Activated CD4-positive, alpha-beta T cell treated with anti-CD3 and anti-CD28 coated beads, Interleukin-2, amount 10 ng/mL, durations not matched to agents 24 days and 14 days (primary cell): ENCODE measurements at regions of chr4 and their contacts with region 1.

Region 1: DNA sequence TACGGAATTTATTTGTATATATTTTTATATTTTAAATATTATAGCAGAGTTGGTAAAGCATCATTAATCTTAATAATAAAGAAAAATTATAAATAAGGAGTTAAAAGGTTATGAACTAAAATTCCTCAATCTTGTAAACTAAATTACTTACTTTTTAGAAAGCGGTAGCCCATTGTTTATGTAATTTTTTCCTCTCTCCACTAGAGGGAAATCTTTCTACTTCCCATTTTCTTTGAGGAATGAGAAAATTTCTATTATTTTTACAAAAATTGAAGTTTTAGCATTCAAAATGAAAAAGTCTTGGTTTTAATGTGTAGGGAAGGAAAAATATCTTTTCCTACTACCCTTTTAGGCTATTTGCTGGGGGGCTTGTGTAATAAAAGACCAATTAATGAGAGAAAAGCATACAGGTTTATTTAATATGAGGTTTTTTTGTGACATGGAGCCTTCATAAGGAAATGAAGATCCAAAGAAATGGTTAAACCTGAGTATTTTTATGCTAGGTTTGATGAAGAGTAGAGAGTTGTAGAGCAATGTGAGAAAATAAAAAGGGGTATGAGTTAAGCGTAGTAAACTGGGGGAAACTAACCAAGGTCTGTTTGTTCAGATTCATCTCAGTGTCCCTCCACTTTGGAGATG is 68.7 kb upstream of the ADAD1 start:
- DNase-seq: no peak
- H3K4me3 Mint-ChIP-seq: no peak overlapping the region
- H3K27ac Mint-ChIP-seq: no peak overlapping the region
- H3K4me1 Mint-ChIP-seq: peaks cover 8% of the 10 kb centered on the region
- H3K27me3 Mint-ChIP-seq: no peaks in the 10 kb centered on the region

Region 2: DNA sequence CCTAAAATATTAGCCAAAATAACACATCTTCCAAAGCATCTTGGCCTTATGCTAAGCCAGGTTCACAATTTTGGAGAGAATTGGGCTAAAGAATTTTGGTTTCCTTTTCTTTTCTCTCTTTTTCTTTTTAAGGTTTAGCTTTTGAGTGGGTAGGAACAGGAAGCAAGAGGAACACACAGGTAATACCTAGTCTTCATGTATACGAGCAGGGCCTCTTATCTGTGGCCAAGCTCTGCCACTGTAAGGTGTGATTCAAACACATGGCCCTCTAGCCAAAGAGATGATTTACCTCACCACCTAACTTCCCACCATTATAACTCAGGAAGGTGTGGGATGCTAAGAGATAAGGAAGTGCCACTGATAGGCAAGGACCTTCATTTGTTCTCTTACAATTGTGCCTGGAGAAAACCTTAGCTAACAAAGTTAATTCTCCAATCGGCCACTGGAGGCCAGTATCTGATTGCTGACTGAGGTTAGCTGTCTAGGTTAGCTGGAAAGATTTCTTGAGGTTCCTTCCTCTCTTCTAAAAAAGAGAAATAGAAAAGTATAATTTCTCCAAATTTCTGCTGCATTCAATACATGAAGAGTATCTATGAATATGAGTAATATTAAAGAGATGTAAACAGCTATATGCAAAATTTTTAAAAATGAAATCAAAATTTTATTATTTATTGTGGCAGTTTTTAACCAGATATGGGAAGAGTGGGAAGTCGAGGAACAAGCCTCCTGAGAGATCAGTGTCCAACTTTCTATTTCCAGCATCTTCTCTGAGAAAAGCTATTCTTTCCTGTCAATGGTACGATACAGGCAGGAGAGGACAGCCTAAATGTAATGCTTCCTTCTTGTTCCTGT is 409.7 kb before region 1 on chr4:
- intact Hi-C with region 1: loop called (anchors 5 kb)
- DNase-seq: peak; percentile 86
- H3K4me3 Mint-ChIP-seq: no peak overlapping the region
- H3K27ac Mint-ChIP-seq: no peak overlapping the region
- H3K4me1 Mint-ChIP-seq: peaks cover 4% of the 10 kb centered on the region
- H3K27me3 Mint-ChIP-seq: peaks cover 3% of the 10 kb centered on the region

Region 3: GRCh38 chr4:122065915-122066314 is 244.2 kb before region 1 on chr4:
- intact Hi-C with region 1: no loop called
- DNase-seq: no peak
- H3K4me3 Mint-ChIP-seq: no peak overlapping the region
- H3K27ac Mint-ChIP-seq: no peak overlapping the region
- H3K4me1 Mint-ChIP-seq: no peaks in the 10 kb centered on the region
- H3K27me3 Mint-ChIP-seq: peaks cover 7% of the 10 kb centered on the region

Region 4: DNA sequence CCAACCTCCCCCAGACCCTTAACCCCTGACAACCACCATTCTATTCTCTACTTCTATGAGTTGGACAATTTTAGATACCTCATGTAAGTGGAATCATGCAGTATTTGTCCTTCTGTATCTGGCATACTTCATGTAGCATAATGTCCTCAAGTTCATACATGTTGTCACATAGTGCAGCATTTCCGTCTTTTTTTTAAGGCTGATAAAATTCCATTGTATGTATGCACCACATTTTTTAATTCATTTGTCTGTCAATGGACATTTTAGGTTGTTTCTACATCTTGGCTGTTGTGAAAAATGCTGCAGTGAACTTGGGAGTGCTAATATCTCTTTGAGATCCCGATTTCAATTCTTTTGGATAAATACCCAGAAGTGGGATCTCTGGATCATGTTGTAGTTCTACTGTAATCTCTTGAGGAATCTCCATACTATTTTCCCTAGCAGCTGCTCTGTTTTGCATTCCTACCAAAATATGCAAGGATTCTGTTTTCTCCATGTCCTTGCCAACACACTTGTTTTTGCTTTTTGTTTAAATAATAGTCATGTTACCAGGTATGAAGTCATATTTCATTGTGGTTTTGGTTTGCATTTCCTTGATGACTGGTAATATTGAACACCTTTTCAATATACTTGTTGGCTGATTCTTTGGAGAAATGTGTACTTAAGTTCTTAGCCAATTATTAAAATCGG is 19.9 kb after region 1 on chr4:
- intact Hi-C with region 1: no loop called
- DNase-seq: no peak
- H3K4me3 Mint-ChIP-seq: no peak overlapping the region
- H3K27ac Mint-ChIP-seq: no peak overlapping the region
- H3K4me1 Mint-ChIP-seq: peaks cover 4% of the 10 kb centered on the region
- H3K27me3 Mint-ChIP-seq: no peaks in the 10 kb centered on the region

Region 5: GRCh38 chr4:122379239-122379638 is 69.1 kb after region 1 on chr4:
- intact Hi-C with region 1: no loop called
- DNase-seq: no peak
- H3K4me3 Mint-ChIP-seq: no peak overlapping the region
- H3K27ac Mint-ChIP-seq: no peak overlapping the region
- H3K4me1 Mint-ChIP-seq: no peaks in the 10 kb centered on the region
- H3K27me3 Mint-ChIP-seq: no peaks in the 10 kb centered on the region

Region 6: GRCh38 chr4:123073650-123074049 is 763.5 kb after region 1 on chr4:
- intact Hi-C with region 1: no loop called
- DNase-seq: no peak
- H3K4me3 Mint-ChIP-seq: no peak overlapping the region
- H3K27ac Mint-ChIP-seq: no peak overlapping the region
- H3K4me1 Mint-ChIP-seq: no peaks in the 10 kb centered on the region
- H3K27me3 Mint-ChIP-seq: no peaks in the 10 kb centered on the region